Motor neuron (in vitro differentiated cells): ENCODE measurements at regions of chr16 and their contacts with region 1.

Region 1: DNA sequence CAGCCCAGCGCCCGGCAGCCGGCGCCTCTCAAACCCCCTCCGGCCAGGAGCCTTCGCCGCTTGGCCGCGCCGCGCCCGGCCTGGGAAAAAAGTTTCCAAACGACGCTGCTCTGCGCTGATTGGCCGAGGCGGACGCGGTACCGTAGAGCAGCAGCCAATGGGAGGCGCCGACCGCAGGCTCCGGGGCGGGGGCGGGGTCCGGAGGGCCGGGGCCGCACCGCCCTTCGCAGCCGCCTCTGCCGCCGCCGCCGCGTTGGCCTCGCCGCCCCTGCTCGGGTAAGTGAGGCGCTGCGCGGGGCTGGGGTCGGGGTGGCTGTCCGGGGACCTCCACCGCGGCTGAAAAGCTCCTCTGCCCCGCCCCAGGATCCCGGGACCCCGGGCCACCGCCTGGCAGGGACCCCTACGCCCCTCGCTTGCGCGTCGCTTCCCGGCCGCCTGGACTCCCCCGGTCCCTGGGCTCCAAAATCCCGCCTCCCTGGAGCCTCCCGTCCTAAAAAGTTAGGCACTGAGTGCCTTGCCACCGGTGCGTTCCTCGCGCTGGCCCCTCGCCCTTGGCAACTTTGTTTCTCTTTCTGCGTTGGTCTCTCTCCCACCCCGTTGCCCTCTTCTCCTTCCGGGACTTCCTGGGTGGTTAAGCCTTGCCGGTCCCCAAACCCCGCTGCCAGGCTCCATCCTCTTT is at the start of gene NDE1:
- ATAC-seq: peak; percentile 94 to 99 (median 98)
- H3K4me3 ChIP-seq: peak within 1 kb of the TSS; percentile 52 to 82 (median 61)
- H3K27ac ChIP-seq: peak within 1 kb of the TSS in 1 of 2 donors; percentile 56
- H3K4me1 ChIP-seq: peaks cover 0 to 2% of the 10 kb centered on the region in 2 donors
- total RNA-seq, gene NDE1: 7.5 to 36.3 (median 14.4) TPM

Region 2: DNA sequence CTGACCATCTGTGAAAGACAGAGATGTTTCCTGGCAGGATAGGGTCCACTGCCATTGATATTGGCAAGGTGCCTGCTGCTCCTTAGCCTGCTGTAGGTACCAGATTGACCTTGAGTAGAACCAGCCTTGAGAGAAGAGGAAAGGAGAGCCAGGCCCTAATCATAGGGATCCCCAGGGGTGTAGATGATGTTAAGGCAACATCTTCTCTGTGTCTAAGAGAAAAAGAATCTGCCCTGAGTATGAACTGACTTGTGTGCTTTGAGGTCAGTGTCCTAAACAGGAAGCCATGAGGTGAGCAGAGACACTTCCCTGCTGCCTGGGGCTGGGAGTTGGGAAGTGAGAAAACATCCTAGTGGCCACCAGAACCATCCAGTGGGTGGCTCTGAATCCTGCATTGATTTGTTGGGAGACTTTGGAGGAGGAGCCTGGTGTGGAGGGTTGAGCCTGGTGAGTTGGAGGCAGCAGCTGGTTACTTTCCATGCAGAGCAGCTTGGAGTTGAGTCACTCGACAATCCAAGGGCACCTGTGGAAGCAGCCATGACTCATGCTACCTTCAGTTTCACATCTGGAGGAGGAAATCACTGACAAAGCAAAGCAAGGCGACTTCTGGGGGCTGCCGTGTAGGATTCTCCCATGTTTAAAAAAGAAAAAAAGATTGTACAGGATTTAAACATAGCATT is 167.9 kb before region 1 on chr16:
- in situ Hi-C with region 1: no loop called
- ATAC-seq: peak; percentile 73 to 100 (median 88)
- H3K4me3 ChIP-seq: no peak overlapping the region
- H3K27ac ChIP-seq: no peak overlapping the region
- H3K4me1 ChIP-seq: no peaks in the 10 kb centered on the region

Region 3: DNA sequence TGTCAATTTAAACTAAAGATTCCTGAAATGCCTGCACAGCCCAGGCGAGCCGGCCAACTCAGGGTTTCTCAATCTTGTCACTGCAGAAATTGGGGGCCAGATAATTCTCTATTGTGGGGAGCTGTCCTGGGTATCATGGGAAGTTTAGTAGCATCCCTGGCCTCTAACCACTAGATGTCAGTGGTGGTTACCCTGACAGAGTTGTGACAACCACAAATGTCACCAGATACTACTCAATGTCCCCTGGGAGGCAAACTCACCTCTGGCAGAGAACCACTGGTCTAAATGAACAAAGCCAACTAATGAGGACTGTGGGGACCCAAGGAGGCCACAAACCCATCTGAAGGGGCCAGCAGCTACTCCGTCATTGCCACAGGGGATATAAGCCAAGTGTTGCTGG is 115.7 kb after region 1 on chr16:
- in situ Hi-C with region 1: loop called in 1 of 9 experiments (anchors 25 kb)
- ATAC-seq: peak; percentile 33 to 90 (median 66)
- H3K4me3 ChIP-seq: no peak overlapping the region
- H3K27ac ChIP-seq: no peak overlapping the region
- H3K4me1 ChIP-seq: no peaks in the 10 kb centered on the region